ENCODE measurements at regions of chr6 and their contacts with region 1.

Region 1: GRCh38 chr6:89080542-89081422 is at the start of gene PNRC1:
- DNase-seq: peak; percentile 100
- H3K4me3 Mint-ChIP-seq: peak within 1 kb of the TSS; percentile 93
- H3K27ac Mint-ChIP-seq: peak within 1 kb of the TSS; percentile 99
- H3K4me1 Mint-ChIP-seq: peaks cover 30% of the 10 kb centered on the region
- H3K27me3 Mint-ChIP-seq: no peaks in the 10 kb centered on the region
- total RNA-seq, gene PNRC1: 110 to 111 TPM

Region 2: GRCh38 chr6:87472525-87473418 is 1608.0 kb before region 1 on chr6 and contains the start of gene SLC35A1:
- CTCF ChIA-PET with region 1: no interaction called
- intact Hi-C with region 1: loop called (anchors 1 kb)
- DNase-seq: peak; percentile 80
- H3K4me3 Mint-ChIP-seq: peak within 1 kb of the TSS; percentile 95
- H3K27ac Mint-ChIP-seq: peak within 1 kb of the TSS; percentile 92
- H3K4me1 Mint-ChIP-seq: peaks cover 15% of the 10 kb centered on the region
- H3K27me3 Mint-ChIP-seq: peaks cover 4% of the 10 kb centered on the region
- total RNA-seq, gene SLC35A1: 6.7 to 6.8 TPM

Region 3: GRCh38 chr6:88982720-88983119 is 98.1 kb before region 1 on chr6:
- CTCF ChIA-PET with region 1: interaction called, 23 read pairs
- intact Hi-C with region 1: loop called (anchors 1 kb)
- DNase-seq: peak; percentile 37
- H3K4me3 Mint-ChIP-seq: no peak overlapping the region
- H3K27ac Mint-ChIP-seq: no peak overlapping the region
- H3K4me1 Mint-ChIP-seq: no peaks in the 10 kb centered on the region
- H3K27me3 Mint-ChIP-seq: no peaks in the 10 kb centered on the region

Region 4: DNA sequence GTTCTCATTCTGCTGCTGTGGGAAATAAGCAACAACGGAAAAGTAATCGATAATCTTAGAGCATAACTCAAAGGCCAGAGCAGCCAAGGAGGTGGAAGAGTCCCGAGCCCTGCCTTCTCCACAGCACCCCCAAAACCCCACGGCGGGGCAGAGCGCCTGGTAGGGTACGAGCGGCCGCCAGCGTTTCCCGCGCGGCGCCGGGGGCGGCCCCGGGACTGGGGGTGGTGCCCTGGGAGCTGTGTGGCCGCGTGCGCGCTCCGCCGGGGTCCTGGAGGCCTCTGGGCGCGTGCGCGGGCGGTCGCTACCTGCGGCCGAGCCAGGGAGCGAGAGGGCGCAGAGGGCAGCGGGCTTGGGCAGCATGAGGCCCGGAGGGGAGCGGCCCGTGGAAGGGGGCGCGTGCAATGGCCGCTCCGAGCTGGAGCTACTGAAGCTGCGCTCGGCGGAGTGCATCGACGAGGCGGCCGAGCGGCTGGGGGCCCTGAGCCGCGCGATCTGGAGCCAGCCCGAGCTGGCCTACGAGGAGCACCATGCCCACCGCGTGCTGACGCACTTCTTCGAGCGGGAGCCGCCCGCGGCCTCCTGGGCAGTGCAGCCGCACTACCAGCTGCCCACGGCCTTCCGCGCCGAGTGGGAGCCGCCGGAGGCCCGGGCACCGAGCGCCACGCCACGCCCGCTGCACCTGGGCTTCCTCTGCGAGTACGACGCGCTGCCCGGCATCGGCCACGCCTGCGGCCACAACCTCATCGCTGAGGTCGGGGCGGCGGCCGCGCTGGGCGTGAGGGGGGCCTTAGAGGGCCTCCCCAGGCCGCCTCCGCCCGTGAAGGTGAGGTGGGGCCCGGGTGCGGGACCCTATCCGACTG is 65.2 kb after region 1 on chr6 and contains the start of gene PM20D2:
- CTCF ChIA-PET with region 1: interaction called, 18 read pairs
- intact Hi-C with region 1: loop called (anchors 1 kb)
- DNase-seq: peak; percentile 59
- H3K4me3 Mint-ChIP-seq: peak within 1 kb of the TSS; percentile 90
- H3K27ac Mint-ChIP-seq: peak within 1 kb of the TSS; percentile 96
- H3K4me1 Mint-ChIP-seq: peaks cover 27% of the 10 kb centered on the region
- H3K27me3 Mint-ChIP-seq: no peaks in the 10 kb centered on the region
- total RNA-seq, gene PM20D2: 11.6 to 12.7 TPM

Region 5: GRCh38 chr6:89208551-89208950 is 127.8 kb after region 1 on chr6:
- CTCF ChIA-PET with region 1: no interaction called
- intact Hi-C with region 1: no loop called
- DNase-seq: no peak
- H3K4me3 Mint-ChIP-seq: no peak overlapping the region
- H3K27ac Mint-ChIP-seq: no peak overlapping the region
- H3K4me1 Mint-ChIP-seq: no peaks in the 10 kb centered on the region
- H3K27me3 Mint-ChIP-seq: no peaks in the 10 kb centered on the region

Region 6: DNA sequence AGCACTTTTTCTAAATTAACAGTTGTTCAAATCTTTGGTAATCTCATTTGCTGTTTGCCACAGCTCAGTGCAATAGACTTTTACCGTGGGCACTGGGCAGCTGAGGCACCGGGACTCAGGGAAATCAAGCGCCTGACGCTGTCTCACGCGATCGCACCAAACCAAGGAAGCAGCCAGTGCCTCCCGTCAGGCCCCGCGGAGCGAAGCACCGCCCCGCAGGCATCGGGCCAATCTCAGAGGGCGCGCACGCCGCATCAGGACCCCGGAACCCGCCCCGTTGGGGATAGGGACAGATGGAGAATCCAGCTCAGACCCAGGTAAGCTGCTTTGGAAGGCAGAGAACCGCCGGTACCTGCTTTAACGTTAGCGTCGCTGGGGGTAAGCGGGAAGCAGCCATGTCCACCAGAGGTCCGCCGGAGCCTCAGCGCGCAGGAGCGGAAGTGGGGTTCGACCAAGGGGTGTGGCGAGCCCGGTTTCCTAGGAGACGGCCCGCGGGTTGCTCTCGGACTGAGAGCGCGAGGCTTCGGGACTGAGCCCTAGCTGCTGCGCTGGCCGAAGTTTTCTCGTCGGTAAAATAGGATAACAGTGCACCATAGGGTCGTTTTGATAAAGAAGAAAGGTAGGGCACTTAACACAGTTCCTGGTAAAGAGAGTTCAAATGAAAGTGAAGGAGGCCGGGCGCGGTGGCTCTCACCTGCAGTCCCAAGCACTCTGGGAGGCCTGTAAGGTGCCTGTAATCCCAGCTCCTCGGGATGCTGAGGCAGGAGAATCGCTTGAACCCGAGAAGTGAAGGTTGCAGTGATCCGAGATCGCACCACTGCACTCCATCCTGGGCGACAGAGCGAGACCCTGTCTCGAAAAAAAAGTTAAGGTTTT is 557.8 kb after region 1 on chr6 and contains the start of gene LYRM2:
- CTCF ChIA-PET with region 1: no interaction called
- intact Hi-C with region 1: loop called (anchors 2 kb)
- DNase-seq: peak; percentile 95
- H3K4me3 Mint-ChIP-seq: peak within 1 kb of the TSS; percentile 83
- H3K27ac Mint-ChIP-seq: peak within 1 kb of the TSS; percentile 96
- H3K4me1 Mint-ChIP-seq: peaks cover 28% of the 10 kb centered on the region
- H3K27me3 Mint-ChIP-seq: no peaks in the 10 kb centered on the region
- total RNA-seq, gene LYRM2: 15.8 to 18.3 TPM

Region 7: GRCh38 chr6:90466154-90466940 is 1385.6 kb after region 1 on chr6:
- CTCF ChIA-PET with region 1: no interaction called
- intact Hi-C with region 1: loop called (anchors 10 kb)
- DNase-seq: peak; percentile 73
- H3K4me3 Mint-ChIP-seq: no peak overlapping the region
- H3K27ac Mint-ChIP-seq: peak overlapping the region; percentile 90
- H3K4me1 Mint-ChIP-seq: peaks cover 82% of the 10 kb centered on the region
- H3K27me3 Mint-ChIP-seq: no peaks in the 10 kb centered on the region

Measured in activated naive CD4-positive, alpha-beta T cell treated with anti-CD3 and anti-CD28 coated beads for 36 hours (primary cell).